PC-3 (cell line): ENCODE measurements at regions of chr12 and their contacts with region 1.

Region 1: GRCh38 chr12:114668151-114668885 is 15.7 kb downstream of the TBX3 start:
- DNase-seq: peak; percentile 98
- ATAC-seq: peak; percentile 45
- H3K4me3 ChIP-seq: peak overlapping the region; percentile 94
- H3K27ac ChIP-seq: peak overlapping the region; percentile 89
- H3K4me1 ChIP-seq: peaks cover 77% of the 10 kb centered on the region
- H3K27me3 ChIP-seq: no peaks in the 10 kb centered on the region
- CTCF ChIP-seq: peak; percentile 75

Region 2: GRCh38 chr12:114320968-114321367 is 347.4 kb before region 1 on chr12:
- CTCF ChIA-PET with region 1: no interaction called
- POLR2A ChIA-PET with region 1: no interaction called
- intact Hi-C with region 1: no loop called
- DNase-seq: no peak
- ATAC-seq: no peak
- H3K4me3 ChIP-seq: no peak overlapping the region
- H3K27ac ChIP-seq: no peak overlapping the region
- H3K4me1 ChIP-seq: no peaks in the 10 kb centered on the region
- H3K27me3 ChIP-seq: peaks cover 66% of the 10 kb centered on the region
- CTCF ChIP-seq: no peak

Region 3: DNA sequence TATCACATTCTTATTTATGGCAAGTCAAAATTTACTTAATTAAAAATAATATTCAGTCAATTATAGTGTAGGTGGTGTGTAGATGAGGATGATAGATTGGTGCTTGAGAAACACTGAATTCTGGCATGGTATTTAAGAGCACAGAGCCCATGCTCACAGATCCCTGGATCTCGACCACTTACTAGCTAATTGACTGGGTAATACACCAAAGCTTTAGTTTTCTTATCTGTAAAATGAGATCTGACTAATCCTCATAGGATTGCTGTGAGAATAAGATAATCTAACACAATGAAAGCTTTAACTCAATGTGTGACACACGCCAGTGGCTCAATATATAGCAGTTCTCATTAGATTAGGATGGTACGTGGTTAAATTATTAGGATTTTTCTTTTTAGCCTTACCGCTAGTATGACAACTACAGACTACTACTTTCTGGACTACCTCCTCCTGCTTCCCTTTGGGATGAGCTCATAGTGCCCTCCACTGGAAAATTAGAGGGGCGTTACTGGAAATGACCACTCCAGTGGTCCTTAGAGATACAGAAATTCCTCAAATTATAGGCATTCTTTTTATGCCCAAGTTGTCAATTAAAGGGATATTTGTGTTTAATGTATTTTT is 498.5 kb after region 1 on chr12:
- CTCF ChIA-PET with region 1: interaction called, 4 read pairs
- POLR2A ChIA-PET with region 1: no interaction called
- intact Hi-C with region 1: loop called (anchors 1 kb)
- DNase-seq: peak; percentile 34
- ATAC-seq: peak; percentile 67
- H3K4me3 ChIP-seq: no peak overlapping the region
- H3K27ac ChIP-seq: no peak overlapping the region
- H3K4me1 ChIP-seq: no peaks in the 10 kb centered on the region
- H3K27me3 ChIP-seq: no peaks in the 10 kb centered on the region
- CTCF ChIP-seq: no peak; the same call in 1 of the 2 replicates

Region 4: GRCh38 chr12:115341442-115341841 is 673.1 kb after region 1 on chr12:
- CTCF ChIA-PET with region 1: no interaction called
- POLR2A ChIA-PET with region 1: no interaction called
- intact Hi-C with region 1: loop called (anchors 1 kb)
- DNase-seq: peak; percentile 99
- ATAC-seq: peak; percentile 79
- H3K4me3 ChIP-seq: no peak overlapping the region
- H3K27ac ChIP-seq: peak overlapping the region; percentile 90
- H3K4me1 ChIP-seq: peaks cover 45% of the 10 kb centered on the region
- H3K27me3 ChIP-seq: no peaks in the 10 kb centered on the region
- CTCF ChIP-seq: no peak

Region 5: GRCh38 chr12:115632308-115632707 is 964.0 kb after region 1 on chr12:
- CTCF ChIA-PET with region 1: no interaction called
- POLR2A ChIA-PET with region 1: no interaction called
- intact Hi-C with region 1: loop called (anchors 1 kb)
- DNase-seq: peak; percentile 67
- ATAC-seq: peak; percentile 55; the same call in 1 of the 2 replicates
- H3K4me3 ChIP-seq: no peak overlapping the region
- H3K27ac ChIP-seq: no peak overlapping the region
- H3K4me1 ChIP-seq: no peaks in the 10 kb centered on the region
- H3K27me3 ChIP-seq: no peaks in the 10 kb centered on the region
- CTCF ChIP-seq: peak; percentile 78